Naive thymus-derived CD4-positive, alpha-beta T cell (primary cell): ENCODE measurements at regions of chr10 and their contacts with region 1.

Region 1: GRCh38 chr10:31031558-31032257 is at the start of gene ZNF438:
- DNase-seq: peak; percentile 93 to 99 (median 96)
- ATAC-seq: peak; percentile 92
- H3K4me3 ChIP-seq: peak within 1 kb of the TSS; percentile 84
- H3K4me3 Mint-ChIP-seq: peak within 1 kb of the TSS; percentile 89 to 94 (median 92)
- H3K27ac ChIP-seq: peak within 1 kb of the TSS; percentile 96
- H3K27ac Mint-ChIP-seq: peak within 1 kb of the TSS; percentile 93 to 99 (median 99)
- H3K4me1 ChIP-seq: peaks cover 5% of the 10 kb centered on the region in 2 donors
- H3K4me1 Mint-ChIP-seq: peaks cover 7 to 34% (median 14%) of the 10 kb centered on the region in 7 donors
- H3K27me3 ChIP-seq: no peaks in the 10 kb centered on the region
- H3K27me3 Mint-ChIP-seq: no peaks in the 10 kb centered on the region
- total RNA-seq, gene ZNF438: 3.9 to 5.8 (median 4.0) TPM

Region 2: DNA sequence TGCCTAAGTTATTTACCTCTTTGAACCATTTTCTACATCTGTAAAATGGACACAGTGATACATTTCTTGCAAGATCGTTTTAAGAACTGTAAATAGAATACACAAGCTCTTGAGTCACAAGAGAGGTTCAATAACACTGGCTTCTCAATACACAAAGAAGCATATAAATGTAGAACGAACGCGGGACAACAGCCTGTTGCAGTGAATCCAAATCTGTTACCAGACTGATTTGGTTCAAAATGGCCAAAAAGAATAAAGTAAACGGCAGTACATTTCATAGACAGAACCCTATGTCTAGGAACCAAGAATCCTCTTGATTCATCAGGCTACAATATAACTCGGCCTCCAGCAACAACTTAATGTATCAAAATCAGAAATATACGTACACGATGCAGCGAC is 683.3 kb before region 1 on chr10:
- CTCF ChIA-PET with region 1: no interaction called
- POLR2A ChIA-PET with region 1: no interaction called
- intact Hi-C with region 1: loop called (anchors 2 to 10 kb)
- DNase-seq: no peak
- ATAC-seq: no peak
- H3K4me3 ChIP-seq: peak overlapping the region; percentile 86
- H3K4me3 Mint-ChIP-seq: peak overlapping the region; percentile 92 to 99 (median 97)
- H3K27ac ChIP-seq: peak overlapping the region; percentile 84
- H3K27ac Mint-ChIP-seq: peak overlapping the region; percentile 87 to 98 (median 92)
- H3K4me1 ChIP-seq: peaks cover 11 to 18% of the 10 kb centered on the region in 2 donors
- H3K4me1 Mint-ChIP-seq: peaks cover 40 to 63% (median 55%) of the 10 kb centered on the region in 7 donors
- H3K27me3 ChIP-seq: no peaks in the 10 kb centered on the region
- H3K27me3 Mint-ChIP-seq: peaks cover 0 to 5% (median 0%) of the 10 kb centered on the region in 5 donors

Region 3: GRCh38 chr10:30915146-30915545 is 116.6 kb before region 1 on chr10:
- CTCF ChIA-PET with region 1: no interaction called
- POLR2A ChIA-PET with region 1: no interaction called
- intact Hi-C with region 1: no loop called
- DNase-seq: no peak
- ATAC-seq: no peak
- H3K4me3 ChIP-seq: no peak overlapping the region
- H3K4me3 Mint-ChIP-seq: no peak overlapping the region
- H3K27ac ChIP-seq: no peak overlapping the region
- H3K27ac Mint-ChIP-seq: no peak overlapping the region
- H3K4me1 ChIP-seq: no peaks in the 10 kb centered on the region
- H3K4me1 Mint-ChIP-seq: no peaks in the 10 kb centered on the region
- H3K27me3 ChIP-seq: no peaks in the 10 kb centered on the region
- H3K27me3 Mint-ChIP-seq: no peaks in the 10 kb centered on the region

Region 4: GRCh38 chr10:30999070-30999712 is 32.5 kb before region 1 on chr10:
- CTCF ChIA-PET with region 1: no interaction called
- POLR2A ChIA-PET with region 1: no interaction called
- intact Hi-C with region 1: loop called in 1 of 2 experiments (anchors 1 kb)
- DNase-seq: no peak
- ATAC-seq: peak; percentile 86
- H3K4me3 ChIP-seq: peak overlapping the region; percentile 30
- H3K4me3 Mint-ChIP-seq: peak overlapping the region; percentile 4 to 79 (median 72)
- H3K27ac ChIP-seq: no peak overlapping the region
- H3K27ac Mint-ChIP-seq: peak overlapping the region in 8 of 9 donors; percentile 9 to 90 (median 62)
- H3K4me1 ChIP-seq: peaks cover 6 to 7% of the 10 kb centered on the region in 2 donors
- H3K4me1 Mint-ChIP-seq: peaks cover 22 to 43% (median 38%) of the 10 kb centered on the region in 7 donors
- H3K27me3 ChIP-seq: no peaks in the 10 kb centered on the region
- H3K27me3 Mint-ChIP-seq: no peaks in the 10 kb centered on the region

Region 5: GRCh38 chr10:31133628-31134302 is 102.1 kb after region 1 on chr10:
- CTCF ChIA-PET with region 1: no interaction called
- POLR2A ChIA-PET with region 1: no interaction called
- intact Hi-C with region 1: loop called (anchors 1 to 2 kb)
- DNase-seq: peak; percentile 14 to 67 (median 38)
- ATAC-seq: peak; percentile 78
- H3K4me3 ChIP-seq: peak overlapping the region; percentile 66
- H3K4me3 Mint-ChIP-seq: peak overlapping the region; percentile 71 to 87 (median 82)
- H3K27ac ChIP-seq: peak overlapping the region; percentile 80
- H3K27ac Mint-ChIP-seq: peak overlapping the region; percentile 72 to 92 (median 87)
- H3K4me1 ChIP-seq: peaks cover 0 to 33% of the 10 kb centered on the region in 2 donors
- H3K4me1 Mint-ChIP-seq: peaks cover 18 to 68% (median 44%) of the 10 kb centered on the region in 7 donors
- H3K27me3 ChIP-seq: no peaks in the 10 kb centered on the region
- H3K27me3 Mint-ChIP-seq: no peaks in the 10 kb centered on the region

Region 6: GRCh38 chr10:31603235-31604087 is 571.8 kb after region 1 on chr10:
- CTCF ChIA-PET with region 1: no interaction called
- POLR2A ChIA-PET with region 1: no interaction called
- intact Hi-C with region 1: loop called in 1 of 2 experiments (anchors 1 kb)
- DNase-seq: peak; percentile 15 to 91 (median 38)
- ATAC-seq: peak; percentile 93
- H3K4me3 ChIP-seq: peak overlapping the region; percentile 61
- H3K4me3 Mint-ChIP-seq: peak overlapping the region in 9 of 10 donors; percentile 86 to 94 (median 88)
- H3K27ac ChIP-seq: no peak overlapping the region
- H3K27ac Mint-ChIP-seq: peak overlapping the region in 3 of 9 donors; percentile 36 to 74 (median 53)
- H3K4me1 ChIP-seq: peaks cover 9 to 12% of the 10 kb centered on the region in 2 donors
- H3K4me1 Mint-ChIP-seq: peaks cover 0 to 20% (median 11%) of the 10 kb centered on the region in 7 donors
- H3K27me3 ChIP-seq: no peaks in the 10 kb centered on the region
- H3K27me3 Mint-ChIP-seq: peaks cover 0 to 2% (median 0%) of the 10 kb centered on the region in 5 donors